ENCODE measurements at regions of chr18 and their contacts with region 1.

Region 1: GRCh38 chr18:13577091-13577697 is 149.2 kb downstream of the FAM210A start:
- DNase-seq: peak; percentile 58
- H3K4me3 Mint-ChIP-seq: peak overlapping the region; percentile 50
- H3K27ac Mint-ChIP-seq: peak overlapping the region; percentile 86
- H3K4me1 Mint-ChIP-seq: peaks cover 58% of the 10 kb centered on the region
- H3K27me3 Mint-ChIP-seq: no peaks in the 10 kb centered on the region

Region 2: GRCh38 chr18:13558124-13558523 is 19.1 kb before region 1 on chr18:
- CTCF ChIA-PET with region 1: interaction called, 8 read pairs
- POLR2A ChIA-PET with region 1: interaction called, 17 read pairs
- DNase-seq: peak; percentile 33
- H3K4me3 Mint-ChIP-seq: no peak overlapping the region
- H3K27ac Mint-ChIP-seq: no peak overlapping the region
- H3K4me1 Mint-ChIP-seq: peaks cover 22% of the 10 kb centered on the region
- H3K27me3 Mint-ChIP-seq: no peaks in the 10 kb centered on the region

Region 3: DNA sequence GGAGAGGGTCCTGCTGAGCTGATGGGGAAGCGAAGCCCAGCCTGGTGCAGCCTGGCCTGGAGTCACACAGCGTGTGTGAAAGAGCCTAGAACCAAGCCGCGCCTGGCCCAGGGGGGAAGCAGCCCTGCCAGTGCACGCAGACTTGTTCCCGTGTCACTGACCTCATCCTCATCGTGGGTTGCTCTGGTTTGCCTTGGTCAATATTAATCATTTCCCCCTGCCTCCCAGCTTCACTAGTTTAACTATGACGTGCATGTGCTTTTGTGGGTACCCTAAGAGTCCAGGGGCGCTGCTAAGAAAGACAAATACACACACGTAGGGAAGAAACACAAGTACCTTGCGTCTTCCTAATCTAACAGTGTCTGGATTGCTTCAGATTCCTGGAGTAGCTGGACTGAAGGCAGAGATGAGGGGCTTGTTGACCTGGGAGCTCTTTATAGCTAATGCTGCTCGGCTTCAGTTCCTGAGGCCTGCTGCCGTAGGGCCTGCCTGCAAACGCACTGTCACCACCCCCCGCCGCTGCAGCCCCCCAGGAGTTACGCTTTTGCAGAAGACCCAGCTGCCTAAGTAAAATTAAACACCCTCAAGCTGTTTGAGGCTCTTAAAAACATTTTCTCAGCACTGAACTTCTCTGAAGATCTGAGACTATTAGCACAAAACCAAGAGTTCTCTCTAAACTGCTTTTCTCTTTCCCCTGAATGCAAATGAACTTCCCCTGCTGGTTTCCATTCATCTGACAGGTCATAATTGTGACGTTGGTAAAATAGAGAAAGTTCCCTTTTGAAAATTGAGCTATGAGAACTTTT is 10.1 kb before region 1 on chr18:
- CTCF ChIA-PET with region 1: interaction called, 7 read pairs
- POLR2A ChIA-PET with region 1: interaction called, 17 read pairs
- DNase-seq: peak; percentile 42
- H3K4me3 Mint-ChIP-seq: peak overlapping the region; percentile 27
- H3K27ac Mint-ChIP-seq: peak overlapping the region; percentile 83
- H3K4me1 Mint-ChIP-seq: peaks cover 75% of the 10 kb centered on the region
- H3K27me3 Mint-ChIP-seq: no peaks in the 10 kb centered on the region

Region 4: DNA sequence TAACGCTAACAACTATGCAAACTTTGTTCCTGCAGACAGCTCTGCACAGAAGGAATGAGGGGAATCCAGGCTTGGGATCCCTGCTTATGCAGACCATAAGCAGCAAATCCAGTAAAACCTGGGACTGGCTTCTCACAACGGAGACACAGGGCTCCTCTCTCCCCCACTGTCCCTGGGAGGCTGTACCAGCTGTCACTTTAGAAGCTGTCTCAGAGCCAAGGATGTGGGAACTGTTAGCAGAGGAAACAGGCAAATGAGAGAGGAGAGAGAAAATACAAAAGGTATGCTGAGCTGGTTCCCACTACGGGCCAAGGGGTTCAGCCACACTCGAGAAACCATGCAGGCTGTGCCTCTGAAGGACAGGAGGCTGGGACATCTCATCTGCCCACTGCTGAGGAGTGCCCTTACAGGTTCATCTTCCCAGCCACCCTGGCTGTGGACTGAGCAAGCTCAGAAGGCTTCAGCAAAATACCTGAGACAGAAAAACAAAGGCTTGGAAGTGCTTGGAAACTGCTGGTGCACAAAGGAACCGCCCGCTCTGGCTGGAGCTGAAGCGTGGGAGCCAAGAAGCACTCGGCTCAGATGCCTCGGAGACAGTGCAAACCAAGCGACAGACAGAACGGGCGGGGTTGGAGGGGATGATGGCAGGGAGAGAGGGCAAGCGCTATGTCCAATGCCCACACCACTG is 76.7 kb after region 1 on chr18:
- CTCF ChIA-PET with region 1: no interaction called
- POLR2A ChIA-PET with region 1: no interaction called
- DNase-seq: no peak
- H3K4me3 Mint-ChIP-seq: no peak overlapping the region
- H3K27ac Mint-ChIP-seq: no peak overlapping the region
- H3K4me1 Mint-ChIP-seq: no peaks in the 10 kb centered on the region
- H3K27me3 Mint-ChIP-seq: no peaks in the 10 kb centered on the region